ENCODE measurements at regions of chr20 and their contacts with region 1.

Region 1: DNA sequence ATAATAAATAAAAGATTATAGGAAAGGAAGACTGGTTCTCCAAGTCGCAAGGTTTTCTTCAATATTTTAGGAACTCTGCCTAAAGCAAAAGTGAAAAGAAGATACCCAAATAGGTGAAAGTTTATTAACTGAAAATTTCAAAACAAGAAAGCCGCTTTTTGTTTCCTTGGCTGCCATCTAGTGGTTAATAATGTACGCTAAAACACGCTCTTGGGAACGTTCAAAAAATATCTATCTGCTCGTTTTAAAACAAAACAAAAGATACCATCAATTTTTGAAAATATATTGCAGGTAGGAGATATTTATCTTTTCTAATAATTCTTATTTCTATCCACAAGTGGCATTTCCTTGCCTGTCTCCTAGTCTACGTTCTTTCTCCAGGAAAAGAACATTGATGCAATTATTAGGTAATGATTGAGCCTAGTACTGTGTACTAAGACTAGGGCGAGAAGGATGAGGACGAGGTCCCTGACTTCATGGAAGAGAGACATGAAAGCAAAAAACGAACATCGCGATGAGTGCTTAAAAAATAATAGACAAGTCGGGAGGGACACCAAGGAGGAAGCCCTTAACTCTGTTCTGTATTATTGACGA is 97.2 kb downstream of the SPTLC3 start:
- DNase-seq: no peak
- ATAC-seq: peak; percentile 60 to 77 (median 70)
- H3K4me3 ChIP-seq: no peak overlapping the region
- H3K27ac ChIP-seq: no peak overlapping the region
- H3K4me1 ChIP-seq: peaks cover 0 to 9% (median 3%) of the 10 kb centered on the region in 4 donors
- H3K27me3 ChIP-seq: no peaks in the 10 kb centered on the region
- CTCF ChIP-seq: peak; percentile 73 to 86 (median 78)
- POLR2A ChIP-seq: no peak

Region 2: DNA sequence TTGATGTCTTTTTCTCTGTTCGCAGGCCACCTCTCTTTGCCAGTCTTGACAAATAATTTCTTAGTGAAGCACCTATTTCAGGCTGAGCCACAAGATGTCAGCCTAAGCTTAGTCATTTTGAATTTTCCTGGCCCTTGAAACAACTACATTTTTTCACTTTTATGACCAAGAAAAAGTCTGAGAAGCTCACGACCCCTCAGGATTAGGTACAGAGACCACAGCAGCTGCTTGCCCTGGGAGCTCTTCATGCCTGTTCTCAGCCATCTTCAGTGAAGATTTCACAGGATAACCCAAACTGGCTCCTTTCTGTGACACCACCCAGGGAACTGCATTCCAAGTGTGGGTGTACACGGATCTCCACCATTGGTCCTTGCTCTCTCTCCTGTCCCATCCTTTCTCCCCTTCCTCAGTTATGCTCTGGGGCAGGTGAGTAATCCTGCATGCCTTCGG is 135.6 kb before region 1 on chr20:
- intact Hi-C with region 1: loop called (anchors 5 kb)
- DNase-seq: no peak
- ATAC-seq: peak; percentile 80 to 89 (median 83)
- H3K4me3 ChIP-seq: no peak overlapping the region
- H3K27ac ChIP-seq: no peak overlapping the region
- H3K4me1 ChIP-seq: no peaks in the 10 kb centered on the region
- H3K27me3 ChIP-seq: no peaks in the 10 kb centered on the region
- CTCF ChIP-seq: peak; percentile 58 to 85 (median 64)
- POLR2A ChIP-seq: no peak

Region 3: GRCh38 chr20:13037727-13038126 is 68.2 kb before region 1 on chr20:
- intact Hi-C with region 1: no loop called
- DNase-seq: no peak
- ATAC-seq: no peak
- H3K4me3 ChIP-seq: no peak overlapping the region
- H3K27ac ChIP-seq: no peak overlapping the region
- H3K4me1 ChIP-seq: peaks cover 0 to 9% (median 0%) of the 10 kb centered on the region in 4 donors
- H3K27me3 ChIP-seq: no peaks in the 10 kb centered on the region
- CTCF ChIP-seq: no peak
- POLR2A ChIP-seq: no peak